MCF 10A (cell line): ENCODE measurements at regions of chr18 and their contacts with region 1.

Region 1: DNA sequence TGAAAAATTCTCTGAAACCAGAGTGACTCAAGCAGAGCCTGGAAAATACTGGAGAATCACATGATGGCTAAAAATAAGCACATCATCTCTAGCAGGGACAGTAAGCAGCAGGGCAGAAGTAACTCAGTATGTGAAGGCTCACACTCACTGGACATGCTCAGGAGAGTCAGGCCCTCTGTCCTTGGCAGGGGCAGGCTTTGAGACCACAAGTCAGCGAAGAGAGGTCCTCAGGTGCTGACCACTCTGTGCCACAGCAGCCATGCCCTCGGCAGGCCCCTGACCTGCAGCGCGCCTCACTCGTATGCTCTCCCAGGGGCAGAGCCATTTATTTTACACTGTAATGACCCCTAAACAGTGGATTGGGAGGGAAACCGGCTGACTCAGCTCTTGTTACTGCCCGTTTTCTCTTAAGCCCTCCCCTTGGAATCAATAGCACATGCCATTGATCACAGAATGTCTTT is 76.8 kb downstream of the MAPRE2 start:
- DNase-seq: no peak
- H3K4me3 Mint-ChIP-seq: no peak overlapping the region
- H3K27ac Mint-ChIP-seq: no peak overlapping the region
- H3K4me1 Mint-ChIP-seq: no peaks in the 10 kb centered on the region
- H3K27me3 Mint-ChIP-seq: no peaks in the 10 kb centered on the region
- CTCF ChIP-seq: no peak

Region 2: GRCh38 chr18:35050028-35050546 is 67.9 kb before region 1 on chr18:
- CTCF ChIA-PET with region 1: no interaction called
- POLR2A ChIA-PET with region 1: no interaction called
- intact Hi-C with region 1: loop called (anchors 10 kb)
- DNase-seq: no peak
- H3K4me3 Mint-ChIP-seq: no peak overlapping the region
- H3K27ac Mint-ChIP-seq: peak overlapping the region; percentile 66
- H3K4me1 Mint-ChIP-seq: peaks cover 15% of the 10 kb centered on the region
- H3K27me3 Mint-ChIP-seq: no peaks in the 10 kb centered on the region
- CTCF ChIP-seq: no peak